CD8-positive, alpha-beta T cell (primary cell): ENCODE measurements at regions of chr13 and their contacts with region 1.

Region 1: GRCh38 chr13:19567820-19568534 is 6.6 kb upstream of the TPTE2 start:
- DNase-seq: no peak
- ATAC-seq: no peak
- H3K4me3 ChIP-seq: no peak overlapping the region
- H3K4me3 Mint-ChIP-seq: no peak overlapping the region
- H3K27ac ChIP-seq: no peak overlapping the region
- H3K27ac Mint-ChIP-seq: no peak overlapping the region
- H3K4me1 ChIP-seq: no peaks in the 10 kb centered on the region
- H3K4me1 Mint-ChIP-seq: no peaks in the 10 kb centered on the region
- H3K27me3 ChIP-seq: peaks cover 0 to 2% of the 10 kb centered on the region in 2 experiments
- H3K27me3 Mint-ChIP-seq: peaks cover 3% of the 10 kb centered on the region
- CTCF ChIP-seq: no peak

Region 2: GRCh38 chr13:19836472-19836871 is 268.5 kb after region 1 on chr13:
- CTCF ChIA-PET with region 1: no interaction called
- POLR2A ChIA-PET with region 1: interaction called, 10 read pairs
- intact Hi-C with region 1: no loop called
- DNase-seq: no peak
- ATAC-seq: no peak
- H3K4me3 ChIP-seq: no peak overlapping the region
- H3K4me3 Mint-ChIP-seq: no peak overlapping the region
- H3K27ac ChIP-seq: no peak overlapping the region
- H3K27ac Mint-ChIP-seq: no peak overlapping the region
- H3K4me1 ChIP-seq: no peaks in the 10 kb centered on the region
- H3K4me1 Mint-ChIP-seq: peaks cover 5% of the 10 kb centered on the region
- H3K27me3 ChIP-seq: no peaks in the 10 kb centered on the region
- H3K27me3 Mint-ChIP-seq: no peaks in the 10 kb centered on the region
- CTCF ChIP-seq: no peak